GM12878 (cell line): ENCODE measurements at regions of chr2 and their contacts with region 1.

Region 1: DNA sequence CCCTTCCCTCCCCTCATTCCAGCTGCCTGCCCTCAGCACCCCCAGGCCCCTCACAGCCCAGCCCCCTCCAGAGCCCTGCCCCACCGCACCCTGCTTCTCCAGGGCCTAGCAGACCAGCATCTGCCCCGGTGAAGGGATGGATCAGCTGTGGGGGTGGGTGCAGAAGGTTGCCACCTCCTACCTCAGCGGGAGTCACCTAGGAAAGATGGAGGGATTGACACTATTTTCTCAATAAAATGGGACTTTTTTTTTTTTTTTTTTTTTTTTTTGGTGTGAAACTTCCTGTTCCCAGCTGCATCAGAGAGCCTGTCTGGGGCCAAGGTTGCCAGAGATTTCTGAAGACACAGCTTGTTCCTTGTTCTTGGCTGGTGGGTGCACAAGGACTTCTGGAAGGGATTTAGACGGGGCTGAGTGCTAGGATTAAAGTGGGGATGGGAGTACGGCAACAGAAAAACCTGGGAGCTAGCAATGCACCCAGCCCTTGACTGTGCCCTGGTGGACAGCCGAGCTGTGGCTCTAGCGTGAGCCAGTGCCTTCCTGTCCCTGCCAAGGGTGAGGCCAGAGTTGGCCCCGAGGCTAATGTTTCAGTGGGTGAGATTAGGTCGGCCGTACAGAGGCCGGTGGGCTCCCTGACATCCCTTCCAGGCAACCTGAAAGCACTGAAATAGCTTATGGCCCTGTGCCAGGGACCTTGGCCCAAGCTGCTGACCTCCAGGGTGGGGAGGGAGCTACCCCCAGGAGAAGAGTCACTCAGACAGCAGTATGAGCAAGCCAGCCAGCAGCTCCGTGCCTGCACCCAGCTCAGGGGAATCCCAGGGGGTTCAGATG is 4.6 kb downstream of the B3GNT7 start:
- DNase-seq: no peak
- ATAC-seq: peak; percentile 46
- H3K4me3 ChIP-seq: no peak overlapping the region
- H3K27ac ChIP-seq: no peak overlapping the region
- H3K4me1 ChIP-seq: peaks cover 22% of the 10 kb centered on the region
- H3K27me3 ChIP-seq: no peaks in the 10 kb centered on the region
- CTCF ChIP-seq: no peak
- EP300 ChIP-seq: no peak
- POLR2A ChIP-seq: no peak
- RAD21 ChIP-seq: no peak

Region 2: DNA sequence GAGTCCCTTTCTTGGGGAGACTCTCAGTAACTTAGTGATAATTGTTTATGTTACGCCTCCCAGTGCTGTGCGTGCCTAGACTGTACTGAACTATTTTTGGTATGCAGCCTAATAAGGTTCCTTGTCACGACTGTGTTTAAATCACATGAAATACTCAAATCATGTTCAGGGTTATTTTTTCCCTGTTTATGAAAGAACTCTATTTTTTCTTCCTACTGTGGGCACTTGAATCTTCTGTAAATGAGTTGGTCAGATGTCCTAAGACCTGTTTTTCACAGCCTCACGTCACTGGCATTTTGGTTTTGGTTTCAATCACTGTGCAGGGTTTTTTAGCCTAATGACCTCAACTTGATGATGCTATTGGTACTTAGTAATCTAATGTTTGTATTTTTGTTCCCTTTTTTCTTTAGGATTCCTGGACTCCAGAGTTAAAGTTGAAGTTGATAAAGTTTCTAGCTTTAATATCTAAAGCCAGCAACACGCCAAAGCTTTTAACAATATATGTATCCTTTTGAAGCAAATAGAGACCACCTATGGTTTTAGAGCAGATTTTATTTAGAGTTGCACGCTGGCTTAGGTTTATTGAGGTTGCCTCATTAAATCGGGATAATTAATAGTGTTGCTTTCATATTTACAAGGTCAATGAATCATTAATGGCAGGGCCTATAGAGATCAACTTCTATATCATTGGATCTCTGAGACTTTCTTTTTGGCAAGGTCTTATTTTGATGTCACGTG is 177.6 kb before region 1 on chr2:
- CTCF ChIA-PET with region 1: interaction called, 234 read pairs
- POLR2A ChIA-PET with region 1: no interaction called
- RAD21 ChIA-PET with region 1: interaction called, 52 read pairs
- SMC1A ChIA-PET with region 1: interaction called, 66 read pairs
- in situ Hi-C with region 1: no loop called
- intact Hi-C with region 1: loop called (anchors 1 kb)
- DNase-seq: peak; percentile 72
- ATAC-seq: peak; percentile 91
- H3K4me3 ChIP-seq: no peak overlapping the region
- H3K27ac ChIP-seq: peak overlapping the region; percentile 60
- H3K4me1 ChIP-seq: peaks cover 4% of the 10 kb centered on the region
- H3K27me3 ChIP-seq: no peaks in the 10 kb centered on the region
- CTCF ChIP-seq: 0 out of 6 replicates have a peak, but pooled peaks of 1 of the 3 experiments have one; percentile 8
- EP300 ChIP-seq: peak; percentile 94 to 99
- POLR2A ChIP-seq: no peak
- RAD21 ChIP-seq: no peak

Region 3: DNA sequence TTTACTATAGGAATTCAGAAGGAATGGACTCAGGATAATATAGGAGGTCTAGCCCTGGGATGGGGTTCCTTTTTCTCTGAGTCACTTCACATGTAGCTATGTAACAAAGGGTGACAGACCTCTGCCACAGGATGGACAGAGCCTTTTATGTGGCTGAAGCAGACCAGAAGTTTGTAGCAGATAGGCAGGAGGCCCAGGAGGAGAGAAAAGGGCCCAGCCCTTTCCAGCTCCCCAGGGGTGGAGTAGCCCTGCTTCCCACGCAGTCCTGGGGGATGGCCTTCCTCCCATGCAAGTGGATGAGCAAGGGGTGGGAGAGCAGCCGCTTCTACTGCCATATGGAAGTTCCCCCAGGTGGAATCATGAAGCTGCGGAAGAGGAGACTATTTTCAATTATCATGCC is 161.4 kb before region 1 on chr2:
- CTCF ChIA-PET with region 1: interaction called, 19 read pairs
- POLR2A ChIA-PET with region 1: no interaction called
- RAD21 ChIA-PET with region 1: interaction called, 3 read pairs
- SMC1A ChIA-PET with region 1: interaction called, 18 read pairs
- in situ Hi-C with region 1: no loop called
- intact Hi-C with region 1: no loop called
- DNase-seq: no peak
- ATAC-seq: no peak
- H3K4me3 ChIP-seq: no peak overlapping the region
- H3K27ac ChIP-seq: no peak overlapping the region
- H3K4me1 ChIP-seq: no peaks in the 10 kb centered on the region
- H3K27me3 ChIP-seq: no peaks in the 10 kb centered on the region
- CTCF ChIP-seq: no peak
- EP300 ChIP-seq: no peak
- POLR2A ChIP-seq: no peak
- RAD21 ChIP-seq: no peak

Region 4: DNA sequence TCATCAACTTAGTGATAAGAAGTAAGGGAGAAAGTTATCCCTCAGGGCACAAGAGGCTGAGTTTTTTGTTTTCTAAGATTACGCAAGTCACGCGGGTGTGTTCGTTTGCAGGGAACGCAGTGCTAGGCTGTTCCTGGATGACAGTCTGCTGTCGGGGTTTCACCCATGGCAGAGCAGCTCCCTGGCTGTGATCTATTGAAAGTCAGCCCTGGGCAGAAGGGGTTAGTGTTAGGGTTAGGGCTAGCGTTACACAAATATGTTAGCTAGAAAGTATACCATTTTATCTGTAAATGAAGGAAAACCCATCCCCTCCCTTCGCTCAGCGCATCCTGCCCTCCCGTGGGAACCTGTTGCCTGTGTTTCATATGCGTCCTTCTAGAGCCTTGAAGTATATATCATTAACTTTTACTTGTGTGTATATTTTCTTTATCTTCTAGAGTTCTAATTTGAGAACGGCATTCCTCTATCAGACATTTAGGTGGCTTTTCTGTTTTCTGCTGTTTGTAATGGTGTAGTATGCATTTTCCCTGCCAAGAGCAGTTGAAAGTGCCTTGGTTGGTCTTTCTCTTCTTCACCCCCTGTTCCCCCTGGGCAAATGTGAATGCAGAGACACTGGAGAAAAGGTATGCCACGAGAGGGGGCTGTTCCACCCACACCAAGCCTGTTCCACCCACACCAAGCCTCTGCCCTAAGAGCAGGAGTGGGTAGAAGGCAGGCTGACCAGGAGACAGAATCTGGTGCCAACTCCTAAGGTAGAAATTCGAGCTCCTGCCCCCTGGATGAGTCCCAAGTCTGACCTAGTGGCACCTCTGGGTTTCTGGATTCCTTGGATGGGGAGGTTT is 154.6 kb before region 1 on chr2:
- CTCF ChIA-PET with region 1: interaction called, 19 read pairs
- POLR2A ChIA-PET with region 1: interaction called, 11 read pairs
- RAD21 ChIA-PET with region 1: interaction called, 3 read pairs
- SMC1A ChIA-PET with region 1: interaction called, 18 read pairs
- in situ Hi-C with region 1: no loop called
- intact Hi-C with region 1: no loop called
- DNase-seq: no peak
- ATAC-seq: peak; percentile 85
- H3K4me3 ChIP-seq: no peak overlapping the region
- H3K27ac ChIP-seq: no peak overlapping the region
- H3K4me1 ChIP-seq: no peaks in the 10 kb centered on the region
- H3K27me3 ChIP-seq: no peaks in the 10 kb centered on the region
- CTCF ChIP-seq: peak in 2 of 3 experiments; percentile 31 to 48; a peak in 3 of 6 replicates
- EP300 ChIP-seq: no peak
- POLR2A ChIP-seq: no peak
- RAD21 ChIP-seq: peak; percentile 30; the same call in 1 of the 2 replicates

Region 5: DNA sequence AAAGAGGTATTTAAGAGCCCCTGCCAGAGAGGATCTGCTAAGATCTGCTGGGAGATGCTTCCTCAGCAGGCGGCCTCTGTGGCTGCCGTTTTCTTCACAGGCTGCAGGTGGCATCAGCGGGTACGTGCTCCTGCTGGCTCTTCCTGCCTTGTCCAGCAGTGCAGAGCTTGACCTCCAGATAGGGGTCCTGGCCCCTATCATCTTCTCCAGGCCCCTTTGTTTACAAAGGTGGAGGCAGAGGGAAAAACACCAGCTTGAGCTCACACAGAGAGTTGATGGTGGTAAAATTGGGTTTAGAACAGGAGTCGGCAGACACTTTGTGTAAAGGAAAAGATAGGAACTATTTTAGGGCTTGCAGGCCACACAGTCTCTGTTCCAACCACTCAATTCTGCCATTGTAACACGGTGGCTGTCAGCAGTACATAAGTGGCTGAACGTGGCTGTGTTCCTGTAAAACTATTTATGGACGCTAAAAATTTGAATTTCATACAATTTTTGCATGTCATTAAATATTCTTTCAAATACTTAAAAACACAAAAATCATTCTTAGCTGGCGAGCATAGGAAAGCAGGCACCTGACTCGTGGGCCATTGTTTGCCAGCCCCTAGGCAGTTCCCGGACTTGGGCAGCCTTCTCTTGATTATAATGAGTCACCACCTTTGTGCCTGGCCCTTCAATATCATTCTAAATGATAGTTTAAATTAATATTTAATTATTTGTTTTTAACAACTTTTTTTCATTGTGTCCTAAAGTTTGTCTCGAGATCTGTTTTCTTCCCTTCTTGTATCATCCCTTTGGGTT is 102.8 kb before region 1 on chr2:
- CTCF ChIA-PET with region 1: interaction called, 82 read pairs
- POLR2A ChIA-PET with region 1: interaction called, 4 read pairs
- RAD21 ChIA-PET with region 1: interaction called, 15 read pairs
- SMC1A ChIA-PET with region 1: interaction called, 43 read pairs
- in situ Hi-C with region 1: no loop called
- intact Hi-C with region 1: loop called (anchors 1 kb)
- DNase-seq: peak; percentile 36
- ATAC-seq: peak; percentile 81
- H3K4me3 ChIP-seq: no peak overlapping the region
- H3K27ac ChIP-seq: no peak overlapping the region
- H3K4me1 ChIP-seq: peaks cover 40% of the 10 kb centered on the region
- H3K27me3 ChIP-seq: no peaks in the 10 kb centered on the region
- CTCF ChIP-seq: peak; percentile 73 to 90 (median 81)
- EP300 ChIP-seq: no peak
- POLR2A ChIP-seq: no peak
- RAD21 ChIP-seq: peak; percentile 59

Region 6: DNA sequence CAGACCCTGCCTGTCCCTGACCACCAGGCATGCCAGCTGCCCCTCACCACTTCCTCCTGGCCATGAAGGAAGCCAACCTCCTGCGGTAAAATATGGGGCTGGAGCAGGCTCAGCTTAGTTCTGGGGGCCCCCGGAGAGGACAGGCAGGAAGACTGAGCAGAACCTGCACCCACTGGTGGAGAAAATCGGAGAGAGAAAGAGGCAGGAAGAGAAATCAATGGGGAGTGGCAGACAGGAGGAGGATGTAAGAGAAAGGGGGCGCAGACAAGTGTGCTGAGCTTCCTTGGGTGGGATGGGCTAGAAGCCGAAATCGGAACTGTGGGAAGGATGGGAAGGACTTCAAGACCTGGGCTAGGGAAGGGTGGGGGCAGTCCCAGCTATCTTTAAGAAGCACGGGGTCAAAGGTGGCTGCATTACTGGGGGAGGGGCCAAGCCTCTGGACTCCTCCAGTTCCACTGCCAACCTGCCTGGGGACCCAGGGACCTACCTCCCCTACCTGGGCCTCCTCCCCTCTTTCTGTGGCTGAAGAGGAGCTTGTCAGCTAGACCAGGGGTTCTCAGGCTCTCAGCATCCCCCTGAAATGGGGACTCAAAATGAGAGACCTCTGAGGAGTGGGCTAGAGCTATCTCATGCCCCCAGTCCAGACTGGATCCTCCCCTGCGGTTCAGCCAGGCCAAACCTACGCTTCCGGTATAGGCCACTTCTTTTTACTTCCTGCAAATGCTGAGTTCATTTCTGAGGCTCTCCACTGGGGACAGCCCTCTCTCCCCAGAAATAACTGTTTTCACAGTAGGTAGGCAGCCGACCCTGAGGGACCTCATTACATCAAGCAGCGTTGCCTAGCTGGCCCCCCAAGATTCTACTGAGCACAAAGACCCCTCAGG is 38.2 kb before region 1 on chr2:
- CTCF ChIA-PET with region 1: interaction called, 19 read pairs
- POLR2A ChIA-PET with region 1: no interaction called
- RAD21 ChIA-PET with region 1: interaction called, 6 read pairs
- SMC1A ChIA-PET with region 1: interaction called, 10 read pairs
- in situ Hi-C with region 1: no loop called
- intact Hi-C with region 1: no loop called
- DNase-seq: peak; percentile 26
- ATAC-seq: peak; percentile 98
- H3K4me3 ChIP-seq: no peak overlapping the region
- H3K27ac ChIP-seq: peak overlapping the region; percentile 78
- H3K4me1 ChIP-seq: peaks cover 15% of the 10 kb centered on the region
- H3K27me3 ChIP-seq: no peaks in the 10 kb centered on the region
- CTCF ChIP-seq: peak; percentile 19 to 46 (median 38); a peak in 5 of 6 replicates
- EP300 ChIP-seq: no peak
- POLR2A ChIP-seq: peak; percentile 35; the same call in 1 of the 2 replicates
- RAD21 ChIP-seq: 0 out of 2 replicates have a peak, but pooled peaks have one; percentile 27

Region 7: GRCh38 chr2:231452799-231453508 is 52.9 kb after region 1 on chr2:
- CTCF ChIA-PET with region 1: interaction called, 52 read pairs
- POLR2A ChIA-PET with region 1: interaction called, 3 read pairs
- RAD21 ChIA-PET with region 1: interaction called, 12 read pairs
- SMC1A ChIA-PET with region 1: interaction called, 4 read pairs
- in situ Hi-C with region 1: no loop called
- intact Hi-C with region 1: no loop called
- DNase-seq: no peak
- ATAC-seq: peak; percentile 13
- H3K4me3 ChIP-seq: no peak overlapping the region
- H3K27ac ChIP-seq: no peak overlapping the region
- H3K4me1 ChIP-seq: no peaks in the 10 kb centered on the region
- H3K27me3 ChIP-seq: no peaks in the 10 kb centered on the region
- CTCF ChIP-seq: no peak
- EP300 ChIP-seq: no peak
- POLR2A ChIP-seq: peak; percentile 65
- RAD21 ChIP-seq: no peak